Stomach (tissue), 19 donors: ENCODE measurements at regions of chr10 and their contacts with region 1.

Region 1: GRCh38 chr10:59625721-59626522 is 83.7 kb downstream of the SLC16A9 start:
- DNase-seq: peak; percentile 33 to 94
- H3K4me3 ChIP-seq: no peak overlapping the region
- H3K27ac ChIP-seq: peak overlapping the region in 3 of 5 donors; percentile 33 to 54 (median 46)
- H3K4me1 ChIP-seq: peaks cover 0 to 17% (median 6%) of the 10 kb centered on the region in 4 donors
- H3K27me3 ChIP-seq: no peaks in the 10 kb centered on the region
- CTCF ChIP-seq: peak in 5 of 7 experiments; percentile 66 to 88 (median 72)
- EP300 ChIP-seq: no peak
- POLR2A ChIP-seq: no peak

Region 2: GRCh38 chr10:59240582-59241183 is 385.2 kb before region 1 on chr10:
- intact Hi-C with region 1: loop called (anchors 10 kb)
- DNase-seq: peak in 1 of 2 donors; percentile 74
- H3K4me3 ChIP-seq: no peak overlapping the region
- H3K27ac ChIP-seq: no peak overlapping the region
- H3K4me1 ChIP-seq: peaks cover 0 to 5% (median 0%) of the 10 kb centered on the region in 4 donors
- H3K27me3 ChIP-seq: no peaks in the 10 kb centered on the region
- CTCF ChIP-seq: peak in 5 of 7 experiments; percentile 18 to 67 (median 62)
- EP300 ChIP-seq: no peak
- POLR2A ChIP-seq: no peak

Region 3: DNA sequence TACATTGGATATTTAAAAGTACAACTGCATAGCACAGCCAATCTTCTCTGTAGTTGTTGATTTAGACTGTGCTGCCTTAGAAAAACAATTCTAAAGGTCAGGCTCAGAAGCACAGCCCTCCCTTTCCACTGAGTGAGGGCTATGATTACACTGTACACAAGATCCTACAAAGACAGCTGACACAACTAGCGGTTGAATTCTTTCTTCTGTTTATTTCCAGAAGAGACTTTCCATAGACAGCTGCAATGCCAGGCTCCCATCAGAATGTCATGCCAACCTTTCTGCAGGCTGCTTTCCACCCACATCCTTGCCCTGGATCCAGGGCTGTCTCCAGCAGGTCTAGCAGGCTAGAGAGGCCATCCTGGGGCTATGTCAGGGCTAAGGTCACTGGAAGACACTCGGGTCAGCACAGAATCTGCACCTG is 302.9 kb before region 1 on chr10:
- intact Hi-C with region 1: no loop called
- DNase-seq: peak in 1 of 2 donors; percentile 27
- H3K4me3 ChIP-seq: no peak overlapping the region
- H3K27ac ChIP-seq: peak overlapping the region in 1 of 5 donors; percentile 25
- H3K4me1 ChIP-seq: peaks cover 0 to 25% (median 5%) of the 10 kb centered on the region in 4 donors
- H3K27me3 ChIP-seq: no peaks in the 10 kb centered on the region
- CTCF ChIP-seq: no peak
- EP300 ChIP-seq: no peak
- POLR2A ChIP-seq: no peak

Region 4: DNA sequence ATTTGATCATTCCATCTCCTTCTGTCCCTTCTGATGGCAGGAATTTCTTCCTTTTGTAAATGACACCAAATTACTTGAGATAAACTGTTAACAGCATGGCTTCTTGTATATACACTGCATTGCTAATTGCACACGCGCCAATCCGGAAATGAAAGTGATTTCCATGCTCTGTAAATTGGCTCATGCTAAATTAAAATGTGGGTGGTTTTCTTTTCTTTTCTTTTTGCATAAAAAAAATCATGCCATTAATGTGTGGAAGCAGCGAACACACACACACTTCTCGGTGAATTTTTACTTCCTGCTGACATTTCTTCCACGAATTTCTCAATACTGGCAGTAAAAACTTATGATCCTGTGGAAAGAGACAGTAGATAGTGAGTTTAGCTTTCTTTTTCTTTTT is 403.6 kb after region 1 on chr10:
- intact Hi-C with region 1: loop called (anchors 10 kb)
- DNase-seq: no peak
- H3K4me3 ChIP-seq: no peak overlapping the region
- H3K27ac ChIP-seq: no peak overlapping the region
- H3K4me1 ChIP-seq: peaks cover 0 to 21% (median 10%) of the 10 kb centered on the region in 4 donors
- H3K27me3 ChIP-seq: no peaks in the 10 kb centered on the region
- CTCF ChIP-seq: no peak
- EP300 ChIP-seq: no peak
- POLR2A ChIP-seq: no peak